Mucosa of descending colon (tissue), 3 donors: ENCODE measurements at regions of chr6 and their contacts with region 1.

Region 1: DNA sequence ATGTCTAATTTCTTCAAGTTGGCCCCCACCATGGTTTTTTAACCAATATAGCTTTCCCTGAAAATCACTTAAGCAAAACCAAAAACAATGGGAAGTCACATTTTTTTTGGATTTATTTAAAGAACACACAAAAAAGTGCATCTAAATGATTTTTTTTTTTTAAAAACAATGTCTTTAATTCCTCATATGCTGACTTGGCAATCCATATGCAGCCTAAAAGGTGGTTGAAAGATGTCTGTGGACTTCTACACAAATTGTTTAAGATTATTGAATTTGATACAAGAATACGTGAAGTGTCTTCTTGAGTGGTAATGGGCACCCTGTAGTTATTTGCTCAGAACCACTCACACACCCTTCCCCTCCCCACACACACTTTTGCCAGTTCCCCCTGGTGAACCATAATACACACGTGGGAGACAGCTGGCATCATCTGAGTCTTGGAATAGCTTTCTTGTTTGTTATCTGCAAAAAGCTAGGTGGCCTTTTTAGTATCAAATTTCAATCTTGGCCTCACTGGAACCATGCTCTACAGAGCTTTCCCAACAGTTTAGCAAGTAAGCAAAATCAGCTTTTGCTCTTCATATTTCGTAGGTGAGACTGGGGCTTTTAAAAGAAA is 60.9 kb upstream of the TULP1 start:
- DNase-seq: no peak
- ATAC-seq: no peak
- H3K4me3 ChIP-seq: no peak overlapping the region
- H3K4me1 ChIP-seq: no peaks in the 10 kb centered on the region
- CTCF ChIP-seq: no peak

Region 2: GRCh38 chr6:35522660-35523658 is 50.6 kb before region 1 on chr6:
- intact Hi-C with region 1: loop called in 1 of 2 experiments (anchors 10 kb)
- DNase-seq: peak; percentile 73 to 82 (median 77)
- ATAC-seq: peak; percentile 97
- H3K4me3 ChIP-seq: no peak overlapping the region
- H3K4me1 ChIP-seq: no peaks in the 10 kb centered on the region
- CTCF ChIP-seq: peak; percentile 97